ENCODE measurements at regions of chr1 and their contacts with region 1.

Region 1: GRCh38 chr1:237834461-237834860 is 56.3 kb downstream of the ZP4 start:
- DNase-seq: no peak
- CTCF ChIP-seq: no peak

Region 2: GRCh38 chr1:237809099-237809498 is 25.4 kb before region 1 on chr1:
- CTCF ChIA-PET with region 1: interaction called, 12 read pairs
- POLR2A ChIA-PET with region 1: no interaction called
- DNase-seq: no peak
- CTCF ChIP-seq: no peak